Lower leg skin (tissue), 4 donors: ENCODE measurements at regions of chrX and their contacts with region 1.

Region 1: GRCh38 chrX:107659768-107660167 is 31.5 kb downstream of the PRPS1 start:
- DNase-seq: peak in 1 of 2 donors; percentile 36
- H3K4me3 ChIP-seq: no peak overlapping the region
- CTCF ChIP-seq: no peak
- POLR2A ChIP-seq: no peak

Region 2: GRCh38 chrX:107522901-107523300 is 136.9 kb before region 1 on chrX:
- intact Hi-C with region 1: no loop called
- DNase-seq: no peak
- H3K4me3 ChIP-seq: no peak overlapping the region
- CTCF ChIP-seq: no peak
- POLR2A ChIP-seq: no peak

Region 3: GRCh38 chrX:107776649-107777535 is 117.1 kb after region 1 on chrX:
- intact Hi-C with region 1: loop called (anchors 5 kb)
- DNase-seq: peak; percentile 87 to 95
- H3K4me3 ChIP-seq: no peak overlapping the region
- CTCF ChIP-seq: no peak
- POLR2A ChIP-seq: no peak